Dorsolateral prefrontal cortex (tissue), 120 donors: ENCODE measurements at regions of chr7 and their contacts with region 1.

Region 1: GRCh38 chr7:37234928-37235327 is 213.7 kb downstream of the ELMO1 start:
- DNase-seq: peak in 1 of 10 donors; percentile 11
- H3K4me3 ChIP-seq: no peak overlapping the region
- H3K27ac ChIP-seq: peak overlapping the region in 56 of 59 donors; percentile 14 to 100 (median 82)
- H3K27me3 ChIP-seq: peaks cover 0 to 4% (median 0%) of the 10 kb centered on the region in 45 donors
- CTCF ChIP-seq: peak; percentile 18 to 83 (median 69)

Region 2: GRCh38 chr7:37031571-37032257 is 203.2 kb before region 1 on chr7:
- intact Hi-C with region 1: no loop called
- DNase-seq: peak in 8 of 10 donors; percentile 18 to 87 (median 52)
- H3K4me3 ChIP-seq: no peak overlapping the region
- H3K27ac ChIP-seq: peak overlapping the region; percentile 18 to 97 (median 88)
- H3K27me3 ChIP-seq: no peaks in the 10 kb centered on the region
- CTCF ChIP-seq: peak in 2 of 56 donors; percentile 17 to 23

Region 3: DNA sequence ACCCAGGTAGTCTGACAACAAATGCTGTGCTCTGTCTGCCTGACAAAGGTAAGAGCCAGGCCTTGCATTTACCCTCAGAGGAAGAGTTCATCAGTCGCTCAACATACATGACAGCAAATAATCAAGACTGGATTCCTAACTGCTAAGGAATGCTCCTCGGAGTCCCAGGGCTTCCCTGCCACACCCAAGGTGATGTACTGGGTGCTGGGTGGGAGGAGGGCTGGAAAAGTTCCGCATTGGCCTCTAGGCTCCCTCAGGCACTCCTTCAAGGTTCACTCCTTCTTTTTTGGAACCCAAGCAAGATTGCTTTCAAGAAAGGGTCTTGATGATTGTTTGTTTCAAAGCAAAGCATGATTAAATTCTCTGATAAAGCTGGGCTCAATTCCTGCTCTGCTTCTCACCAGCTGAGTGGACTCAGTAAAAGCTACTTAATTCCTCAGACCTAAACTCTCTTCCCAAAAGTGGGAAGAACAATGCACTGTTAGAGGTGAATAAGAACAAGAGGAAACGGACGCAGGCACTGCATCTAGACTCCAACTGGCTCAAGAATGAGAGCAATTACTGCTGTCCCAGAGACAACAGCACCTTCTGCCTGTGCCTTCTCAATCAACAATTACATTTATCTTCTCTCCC is 40.3 kb after region 1 on chr7:
- intact Hi-C with region 1: loop called in 1 of 2 experiments (anchors 5 kb)
- DNase-seq: no peak
- H3K4me3 ChIP-seq: no peak overlapping the region
- H3K27ac ChIP-seq: peak overlapping the region in 58 of 59 donors; percentile 67 to 100 (median 98)
- H3K27me3 ChIP-seq: no peaks in the 10 kb centered on the region
- CTCF ChIP-seq: no peak

Region 4: DNA sequence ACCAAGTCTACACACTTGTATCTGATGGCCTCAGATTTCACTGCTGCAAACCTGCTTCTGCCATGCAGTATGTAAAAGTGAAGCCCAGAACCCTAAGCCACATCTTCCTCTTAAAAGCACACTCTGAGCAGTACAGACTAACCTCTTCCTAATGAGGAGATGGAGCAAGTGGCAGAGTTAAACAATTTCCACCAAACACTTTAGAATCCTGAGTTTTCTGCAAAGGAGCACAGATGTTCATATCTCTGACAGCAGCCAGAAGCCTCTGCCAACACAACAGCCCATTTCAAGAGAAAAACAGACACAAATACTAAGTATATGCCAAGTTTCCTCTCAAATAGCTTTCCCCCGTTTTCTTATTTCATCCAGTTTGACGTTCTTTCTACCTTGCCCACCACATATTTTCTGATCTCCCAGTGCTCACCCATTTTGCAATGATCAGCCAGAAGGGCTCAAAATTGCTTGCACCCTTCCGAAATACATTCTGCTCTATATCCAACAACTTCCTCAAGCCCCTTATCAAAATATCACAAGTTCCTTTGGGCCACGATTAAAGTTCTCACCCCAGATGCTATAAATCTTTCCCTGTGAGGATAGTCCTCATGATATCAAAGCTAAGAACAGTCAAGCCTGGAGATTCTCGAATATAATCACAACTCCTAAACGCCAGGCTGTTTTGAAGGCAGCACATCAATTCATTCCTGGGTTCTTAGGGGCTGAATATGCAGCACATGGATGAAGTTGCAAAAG is 186.2 kb after region 1 on chr7:
- intact Hi-C with region 1: no loop called
- DNase-seq: no peak
- H3K4me3 ChIP-seq: peak overlapping the region in 2 of 59 donors; percentile 13
- H3K27ac ChIP-seq: peak overlapping the region in 37 of 59 donors; percentile 2 to 79 (median 53)
- H3K27me3 ChIP-seq: no peaks in the 10 kb centered on the region
- CTCF ChIP-seq: no peak

Region 5: GRCh38 chr7:37504801-37505200 is 269.9 kb after region 1 on chr7:
- intact Hi-C with region 1: loop called (anchors 10 kb)
- DNase-seq: no peak
- H3K4me3 ChIP-seq: no peak overlapping the region
- H3K27ac ChIP-seq: peak overlapping the region in 55 of 59 donors; percentile 6 to 87 (median 68)
- H3K27me3 ChIP-seq: peaks cover 0 to 7% (median 0%) of the 10 kb centered on the region in 45 donors
- CTCF ChIP-seq: no peak

Region 6: GRCh38 chr7:37643876-37644275 is 408.9 kb after region 1 on chr7:
- intact Hi-C with region 1: loop called in 1 of 2 experiments (anchors 10 kb)
- DNase-seq: no peak
- H3K4me3 ChIP-seq: no peak overlapping the region
- H3K27ac ChIP-seq: no peak overlapping the region
- H3K27me3 ChIP-seq: peaks cover 0 to 8% (median 0%) of the 10 kb centered on the region in 45 donors
- CTCF ChIP-seq: peak in 5 of 56 donors; percentile 10 to 34 (median 15)